Activated naive CD4-positive, alpha-beta T cell treated with anti-CD3 and anti-CD28 coated beads, Interleukin-2, amount 10 ng/mL, durations not matched to agents 7 days and 5 days (primary cell): ENCODE measurements at regions of chr22 and their contacts with region 1.

Region 1: DNA sequence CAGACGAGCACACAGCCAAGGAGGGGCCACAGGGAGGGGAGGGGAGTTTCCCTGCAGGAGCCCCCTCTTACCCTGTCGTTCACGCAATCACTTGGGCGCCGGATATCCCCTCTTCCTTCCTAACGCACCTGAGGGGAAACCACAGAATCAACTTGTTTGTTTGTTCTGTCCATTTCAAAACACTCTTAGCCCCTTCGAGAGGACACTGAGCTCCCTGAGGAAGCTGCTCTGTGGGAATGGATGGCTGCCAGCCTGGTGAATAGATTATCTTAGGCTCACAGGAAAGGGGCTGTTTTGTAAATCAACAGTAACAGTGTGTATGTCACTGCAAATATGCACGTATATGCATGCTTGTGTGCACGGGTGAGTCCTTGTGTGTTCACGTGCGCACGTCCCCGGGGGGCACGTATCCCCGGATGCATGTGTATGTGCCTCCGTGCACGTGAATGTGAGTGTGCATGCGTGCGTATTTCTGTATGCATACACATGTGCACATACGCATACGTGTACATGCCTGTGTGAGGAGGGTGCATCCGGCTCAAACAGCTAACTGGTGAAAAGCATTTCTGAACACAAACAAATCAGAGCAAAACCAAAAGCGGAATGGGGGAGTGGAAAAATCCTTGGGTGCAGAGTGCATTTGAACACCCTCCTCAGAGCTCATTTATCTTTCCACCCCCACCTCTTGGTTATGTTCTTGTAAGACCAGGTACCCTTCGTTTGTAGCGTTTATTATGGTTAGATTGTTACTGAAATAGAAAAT is 7.2 kb downstream of the ARSA start:
- DNase-seq: peak; percentile 86
- H3K4me3 Mint-ChIP-seq: peak overlapping the region; percentile 85
- H3K27ac Mint-ChIP-seq: peak overlapping the region; percentile 100
- H3K4me1 Mint-ChIP-seq: peaks cover 46% of the 10 kb centered on the region
- H3K27me3 Mint-ChIP-seq: no peaks in the 10 kb centered on the region

Region 2: DNA sequence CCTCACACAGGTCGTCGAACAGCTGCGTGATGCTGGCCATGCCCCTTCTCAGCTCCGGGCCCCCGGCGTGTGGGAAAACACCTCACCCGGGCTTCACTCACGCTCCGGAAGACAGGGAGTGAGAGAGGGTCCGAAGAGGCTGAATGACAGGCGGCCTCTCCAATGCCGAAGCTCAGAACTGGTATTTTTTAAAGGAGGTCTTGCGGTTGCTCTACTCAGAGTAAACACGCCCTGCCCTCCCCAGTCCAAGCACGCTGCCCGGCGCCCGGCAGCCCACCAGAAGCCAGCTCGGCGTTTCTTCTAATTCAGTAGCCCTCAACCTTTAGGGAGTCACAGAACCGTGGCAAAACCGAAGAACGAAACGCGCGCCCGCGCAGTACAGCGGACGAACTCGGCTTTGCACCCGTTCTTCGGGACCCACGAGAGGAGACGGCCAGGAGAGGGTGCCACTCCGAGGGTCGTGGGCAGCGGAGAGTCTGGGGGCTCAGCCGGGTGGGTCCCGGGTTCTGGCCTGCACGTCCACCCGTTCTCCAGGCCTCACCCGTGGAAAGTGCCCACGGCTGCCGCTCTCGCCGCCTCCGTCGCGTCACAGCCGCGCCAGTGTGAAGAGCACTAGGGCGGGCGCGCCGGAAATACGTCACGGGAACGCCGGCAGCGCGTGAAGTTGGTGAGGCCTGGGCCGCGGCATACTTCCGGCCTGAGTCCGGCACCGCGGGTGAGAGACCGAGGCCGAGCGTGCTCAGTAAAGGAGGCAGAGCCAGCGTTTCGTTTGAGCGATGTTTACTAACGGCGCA is 376.2 kb before region 1 on chr22 and contains the start of gene TUBGCP6:
- CTCF ChIA-PET with region 1: interaction called, 15 read pairs
- DNase-seq: peak; percentile 95
- H3K4me3 Mint-ChIP-seq: peak within 1 kb of the TSS; percentile 97
- H3K27ac Mint-ChIP-seq: peak within 1 kb of the TSS; percentile 98
- H3K4me1 Mint-ChIP-seq: peaks cover 53% of the 10 kb centered on the region
- H3K27me3 Mint-ChIP-seq: no peaks in the 10 kb centered on the region

Region 3: GRCh38 chr22:50544078-50544745 is 76.6 kb before region 1 on chr22:
- CTCF ChIA-PET with region 1: interaction called, 14 read pairs
- DNase-seq: peak; percentile 88
- H3K4me3 Mint-ChIP-seq: peak overlapping the region; percentile 53
- H3K27ac Mint-ChIP-seq: peak overlapping the region; percentile 85
- H3K4me1 Mint-ChIP-seq: peaks cover 62% of the 10 kb centered on the region
- H3K27me3 Mint-ChIP-seq: no peaks in the 10 kb centered on the region